ENCODE measurements at regions of chr19 and their contacts with region 1.

Region 1: GRCh38 chr19:44653977-44654774 is 10.5 kb downstream of the PVR start:
- DNase-seq: peak; percentile 39 to 72 (median 58)
- ATAC-seq: peak; percentile 98
- H3K4me3 ChIP-seq: no peak overlapping the region
- H3K4me3 Mint-ChIP-seq: no peak overlapping the region
- H3K27ac ChIP-seq: no peak overlapping the region
- H3K27ac Mint-ChIP-seq: peak overlapping the region in 1 of 9 donors; percentile 27
- H3K4me1 ChIP-seq: peaks cover 0 to 4% of the 10 kb centered on the region in 2 donors
- H3K4me1 Mint-ChIP-seq: peaks cover 6 to 13% (median 10%) of the 10 kb centered on the region in 7 donors
- H3K27me3 ChIP-seq: no peaks in the 10 kb centered on the region
- H3K27me3 Mint-ChIP-seq: no peaks in the 10 kb centered on the region

Region 2: DNA sequence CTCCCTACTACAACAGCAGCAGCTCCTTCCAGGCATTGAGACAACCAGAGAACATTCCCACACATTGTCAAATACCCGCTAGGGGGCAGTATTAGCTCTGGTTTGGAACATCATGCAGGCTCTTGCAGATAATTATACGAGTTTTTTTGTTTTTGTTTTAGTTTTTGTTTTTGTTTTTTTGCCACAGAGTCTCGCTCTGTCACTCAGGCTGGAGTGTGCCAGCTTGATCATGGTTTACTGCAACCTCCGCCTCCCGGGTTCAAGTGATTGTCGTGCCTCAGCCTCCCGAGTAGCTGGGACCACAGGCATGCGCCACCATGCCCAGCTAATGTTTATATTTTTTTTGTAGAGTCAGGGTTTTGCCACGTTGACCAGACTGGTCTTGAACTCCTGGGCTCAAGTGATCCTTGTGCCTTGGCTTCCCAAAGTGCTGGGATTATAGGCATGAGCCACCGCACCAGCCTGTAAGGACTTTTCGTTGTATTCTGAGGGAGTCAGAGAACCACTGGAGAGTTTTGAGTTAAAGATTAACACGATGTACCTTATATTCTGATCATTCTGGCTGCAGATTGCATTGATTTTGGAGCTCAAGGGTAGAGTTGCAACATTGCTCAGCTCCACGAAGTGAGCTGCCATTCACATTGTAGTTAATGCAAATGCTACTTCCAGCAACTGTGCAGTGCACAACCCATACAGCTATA is 83.0 kb before region 1 on chr19:
- CTCF ChIA-PET with region 1: interaction called, 13 read pairs
- POLR2A ChIA-PET with region 1: no interaction called
- intact Hi-C with region 1: loop called (anchors 1 kb)
- DNase-seq: peak in 8 of 9 donors; percentile 18 to 62 (median 42)
- ATAC-seq: peak; percentile 59
- H3K4me3 ChIP-seq: no peak overlapping the region
- H3K4me3 Mint-ChIP-seq: no peak overlapping the region
- H3K27ac ChIP-seq: no peak overlapping the region
- H3K27ac Mint-ChIP-seq: peak overlapping the region in 1 of 9 donors; percentile 25
- H3K4me1 ChIP-seq: no peaks in the 10 kb centered on the region
- H3K4me1 Mint-ChIP-seq: no peaks in the 10 kb centered on the region
- H3K27me3 ChIP-seq: no peaks in the 10 kb centered on the region
- H3K27me3 Mint-ChIP-seq: peaks cover 0 to 26% (median 22%) of the 10 kb centered on the region in 5 donors

Region 3: GRCh38 chr19:44587963-44588770 is 66.0 kb before region 1 on chr19:
- CTCF ChIA-PET with region 1: interaction called, 10 read pairs
- POLR2A ChIA-PET with region 1: no interaction called
- intact Hi-C with region 1: loop called in 1 of 2 experiments (anchors 1 kb)
- DNase-seq: peak in 1 of 9 donors; percentile 27
- ATAC-seq: peak; percentile 51
- H3K4me3 ChIP-seq: no peak overlapping the region
- H3K4me3 Mint-ChIP-seq: no peak overlapping the region
- H3K27ac ChIP-seq: no peak overlapping the region
- H3K27ac Mint-ChIP-seq: no peak overlapping the region
- H3K4me1 ChIP-seq: no peaks in the 10 kb centered on the region
- H3K4me1 Mint-ChIP-seq: peaks cover 0 to 6% (median 0%) of the 10 kb centered on the region in 7 donors
- H3K27me3 ChIP-seq: no peaks in the 10 kb centered on the region
- H3K27me3 Mint-ChIP-seq: peaks cover 0 to 6% (median 3%) of the 10 kb centered on the region in 5 donors

Region 4: DNA sequence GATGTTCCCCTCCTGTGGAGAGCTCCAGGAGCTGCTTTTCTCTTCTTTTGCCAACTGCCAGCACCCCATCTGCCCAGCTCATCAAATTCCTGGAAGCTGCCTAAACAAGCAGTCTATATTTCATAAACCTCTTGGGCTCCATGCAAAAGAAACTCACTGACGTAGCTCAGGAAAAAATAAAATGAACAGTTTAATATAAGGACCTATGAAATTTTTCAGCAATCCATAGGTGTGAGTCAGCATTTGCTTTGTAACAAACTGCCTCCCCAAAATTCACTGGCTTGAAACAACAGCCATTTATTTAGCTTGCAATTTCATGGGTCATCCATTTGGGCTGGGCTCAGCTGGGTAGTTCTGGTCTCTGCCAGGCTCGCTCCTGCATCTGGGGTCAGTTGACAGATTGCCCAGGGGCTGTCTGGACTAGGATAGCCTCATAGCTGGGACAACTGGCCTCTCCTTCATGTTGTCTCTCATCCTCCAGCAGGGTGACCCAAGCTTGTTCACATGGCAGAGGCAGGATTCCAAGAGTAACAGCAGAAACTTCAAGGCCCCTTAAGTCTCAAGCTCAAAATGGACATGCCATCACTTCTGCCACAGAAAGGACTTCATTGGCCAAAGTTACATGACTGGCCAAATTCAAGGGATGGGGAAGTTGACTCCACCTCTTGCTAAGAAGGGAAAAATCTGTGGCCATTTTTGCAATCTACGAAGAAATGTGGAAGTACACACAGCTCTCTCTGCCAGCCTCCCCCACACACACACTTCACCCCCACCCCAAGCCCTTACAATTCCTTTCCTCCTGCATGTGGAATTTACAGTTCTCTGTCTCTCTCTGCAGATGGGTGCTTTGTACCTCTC is 18.4 kb before region 1 on chr19:
- CTCF ChIA-PET with region 1: interaction called, 10 read pairs
- POLR2A ChIA-PET with region 1: no interaction called
- intact Hi-C with region 1: no loop called
- DNase-seq: no peak
- ATAC-seq: peak; percentile 41
- H3K4me3 ChIP-seq: no peak overlapping the region
- H3K4me3 Mint-ChIP-seq: no peak overlapping the region
- H3K27ac ChIP-seq: no peak overlapping the region
- H3K27ac Mint-ChIP-seq: no peak overlapping the region
- H3K4me1 ChIP-seq: no peaks in the 10 kb centered on the region
- H3K4me1 Mint-ChIP-seq: no peaks in the 10 kb centered on the region
- H3K27me3 ChIP-seq: no peaks in the 10 kb centered on the region
- H3K27me3 Mint-ChIP-seq: peaks cover 0 to 25% (median 6%) of the 10 kb centered on the region in 5 donors

Region 5: GRCh38 chr19:44723952-44724319 is 69.8 kb after region 1 on chr19:
- CTCF ChIA-PET with region 1: interaction called, 3 read pairs
- POLR2A ChIA-PET with region 1: no interaction called
- intact Hi-C with region 1: loop called in 1 of 2 experiments (anchors 1 kb)
- DNase-seq: peak; percentile 64 to 84 (median 76)
- ATAC-seq: peak; percentile 93
- H3K4me3 ChIP-seq: no peak overlapping the region
- H3K4me3 Mint-ChIP-seq: peak overlapping the region in 1 of 10 donors; percentile 60
- H3K27ac ChIP-seq: no peak overlapping the region
- H3K27ac Mint-ChIP-seq: peak overlapping the region in 5 of 9 donors; percentile 26 to 79 (median 61)
- H3K4me1 ChIP-seq: peaks cover 0 to 10% of the 10 kb centered on the region in 2 donors
- H3K4me1 Mint-ChIP-seq: peaks cover 8 to 62% (median 24%) of the 10 kb centered on the region in 7 donors
- H3K27me3 ChIP-seq: no peaks in the 10 kb centered on the region
- H3K27me3 Mint-ChIP-seq: peaks cover 0 to 4% (median 0%) of the 10 kb centered on the region in 5 donors

Region 6: GRCh38 chr19:44845612-44846454 is 191.7 kb after region 1 on chr19 and contains the start of gene NECTIN2:
- CTCF ChIA-PET with region 1: interaction called, 4 read pairs
- POLR2A ChIA-PET with region 1: no interaction called
- intact Hi-C with region 1: loop called (anchors 1 to 10 kb)
- DNase-seq: peak; percentile 47 to 95 (median 69)
- ATAC-seq: peak; percentile 85
- H3K4me3 ChIP-seq: peak within 1 kb of the TSS; percentile 57
- H3K4me3 Mint-ChIP-seq: peak within 1 kb of the TSS; percentile 82 to 98 (median 89)
- H3K27ac ChIP-seq: peak within 1 kb of the TSS; percentile 58
- H3K27ac Mint-ChIP-seq: peak within 1 kb of the TSS in 8 of 9 donors; percentile 61 to 92 (median 79)
- H3K4me1 ChIP-seq: peaks cover 18 to 19% of the 10 kb centered on the region in 2 donors
- H3K4me1 Mint-ChIP-seq: peaks cover 18 to 38% (median 29%) of the 10 kb centered on the region in 7 donors
- H3K27me3 ChIP-seq: peaks cover 0 to 5% of the 10 kb centered on the region in 2 donors
- H3K27me3 Mint-ChIP-seq: peaks cover 0 to 46% (median 9%) of the 10 kb centered on the region in 5 donors
- total RNA-seq, gene NECTIN2: 0.17 to 9.2 (median 1.2) TPM

Measured in naive thymus-derived CD4-positive, alpha-beta T cell (primary cell).